ENCODE measurements at regions of chr7 and their contacts with region 1.

Region 1: DNA sequence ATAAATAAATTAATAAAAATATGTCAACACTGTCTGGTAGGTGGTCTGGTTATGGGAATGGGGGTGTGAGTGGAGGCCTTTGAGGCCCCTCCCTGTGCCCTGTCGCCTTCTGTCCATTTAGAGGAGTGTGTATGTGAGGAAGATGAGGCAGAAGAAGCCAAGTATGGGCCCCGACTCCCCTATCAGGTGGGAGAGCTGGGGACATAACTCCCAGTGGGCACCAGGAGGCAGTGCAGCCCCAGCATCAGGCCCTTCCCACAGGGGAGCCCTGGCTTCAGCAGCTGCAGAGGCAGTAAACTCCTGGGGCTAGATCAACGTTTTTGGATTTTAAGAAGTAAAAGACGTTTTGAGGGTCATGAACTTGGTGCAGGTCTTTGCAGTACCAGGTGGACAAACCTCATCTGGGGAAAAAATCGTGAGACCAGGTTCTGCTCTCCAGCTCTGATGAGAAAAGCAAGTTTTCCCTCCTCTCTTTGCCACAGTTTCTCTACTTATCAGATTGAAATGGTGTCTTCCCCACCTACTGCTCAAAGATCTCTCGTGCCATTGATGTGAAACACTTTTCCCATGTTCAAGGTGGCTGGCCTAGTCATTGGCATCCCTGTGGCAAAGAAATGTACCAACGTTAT is 167.8 kb upstream of the EEPD1 start:
- DNase-seq: peak; percentile 81 to 87
- H3K4me3 ChIP-seq: no peak overlapping the region
- H3K27ac ChIP-seq: no peak overlapping the region
- H3K4me1 ChIP-seq: peaks cover 0 to 28% (median 24%) of the 10 kb centered on the region in 4 donors
- H3K27me3 ChIP-seq: no peaks in the 10 kb centered on the region
- CTCF ChIP-seq: peak; percentile 92 to 98

Region 2: GRCh38 chr7:35701287-35701900 is 283.8 kb before region 1 on chr7:
- intact Hi-C with region 1: loop called (anchors 10 kb)
- DNase-seq: no peak
- H3K4me3 ChIP-seq: no peak overlapping the region
- H3K27ac ChIP-seq: no peak overlapping the region
- H3K4me1 ChIP-seq: peaks cover 0 to 2% (median 0%) of the 10 kb centered on the region in 4 donors
- H3K27me3 ChIP-seq: no peaks in the 10 kb centered on the region
- CTCF ChIP-seq: no peak

Region 3: GRCh38 chr7:36152756-36153570 is 167.7 kb after region 1 on chr7 and contains the start of gene EEPD1:
- intact Hi-C with region 1: loop called (anchors 10 kb)
- DNase-seq: peak; percentile 100
- H3K4me3 ChIP-seq: peak within 1 kb of the TSS; percentile 65 to 84
- H3K27ac ChIP-seq: peak within 1 kb of the TSS; percentile 84 to 87
- H3K4me1 ChIP-seq: peaks cover 4 to 47% (median 40%) of the 10 kb centered on the region in 4 donors
- H3K27me3 ChIP-seq: no peaks in the 10 kb centered on the region
- CTCF ChIP-seq: no peak

Region 4: GRCh38 chr7:36291387-36292316 is 306.4 kb after region 1 on chr7:
- intact Hi-C with region 1: loop called (anchors 2 kb)
- DNase-seq: peak; percentile 89 to 91
- H3K4me3 ChIP-seq: peak overlapping the region; percentile 29 to 43
- H3K27ac ChIP-seq: peak overlapping the region; percentile 80 to 87
- H3K4me1 ChIP-seq: peaks cover 0 to 32% (median 16%) of the 10 kb centered on the region in 4 donors
- H3K27me3 ChIP-seq: no peaks in the 10 kb centered on the region
- CTCF ChIP-seq: peak; percentile 96 to 98

Region 5: GRCh38 chr7:36318116-36318515 is 332.9 kb after region 1 on chr7:
- intact Hi-C with region 1: loop called (anchors 2 kb)
- DNase-seq: no peak
- H3K4me3 ChIP-seq: no peak overlapping the region
- H3K27ac ChIP-seq: no peak overlapping the region
- H3K4me1 ChIP-seq: no peaks in the 10 kb centered on the region
- H3K27me3 ChIP-seq: no peaks in the 10 kb centered on the region
- CTCF ChIP-seq: no peak

Measured in tibial artery (tissue), 4 donors.